Left colon (tissue), 2 donors: ENCODE measurements at regions of chr15 and their contacts with region 1.

Region 1: DNA sequence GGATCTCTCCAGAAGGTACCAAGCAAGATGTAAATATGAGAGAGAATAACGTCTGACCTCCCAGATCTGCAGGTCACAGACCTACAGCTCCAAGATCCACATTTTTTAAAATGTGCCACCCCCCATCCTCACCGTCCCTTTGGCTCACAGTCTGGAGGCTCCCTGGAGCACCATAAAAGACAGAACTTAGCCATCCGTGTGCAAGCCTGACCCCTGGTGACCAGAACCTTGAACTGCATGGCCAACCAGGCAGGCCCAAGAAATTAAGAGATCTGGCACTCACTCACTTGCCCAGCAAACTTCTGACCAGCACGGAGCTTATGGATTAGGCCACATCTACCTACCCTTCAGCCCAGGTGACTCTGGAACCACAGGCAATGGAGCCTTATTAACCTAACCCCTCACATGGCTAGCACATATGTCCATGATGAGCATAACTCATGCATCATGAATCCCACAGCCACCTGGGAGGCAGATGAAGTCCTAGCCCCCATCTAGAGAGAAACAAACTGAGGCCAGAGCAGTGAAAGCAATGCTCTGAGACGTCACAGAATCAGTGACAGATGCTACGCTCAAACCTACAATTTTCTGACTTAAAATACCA is 275.3 kb downstream of the UACA start:
- DNase-seq: peak in 1 of 2 donors; percentile 77
- ATAC-seq: peak; percentile 75

Region 2: DNA sequence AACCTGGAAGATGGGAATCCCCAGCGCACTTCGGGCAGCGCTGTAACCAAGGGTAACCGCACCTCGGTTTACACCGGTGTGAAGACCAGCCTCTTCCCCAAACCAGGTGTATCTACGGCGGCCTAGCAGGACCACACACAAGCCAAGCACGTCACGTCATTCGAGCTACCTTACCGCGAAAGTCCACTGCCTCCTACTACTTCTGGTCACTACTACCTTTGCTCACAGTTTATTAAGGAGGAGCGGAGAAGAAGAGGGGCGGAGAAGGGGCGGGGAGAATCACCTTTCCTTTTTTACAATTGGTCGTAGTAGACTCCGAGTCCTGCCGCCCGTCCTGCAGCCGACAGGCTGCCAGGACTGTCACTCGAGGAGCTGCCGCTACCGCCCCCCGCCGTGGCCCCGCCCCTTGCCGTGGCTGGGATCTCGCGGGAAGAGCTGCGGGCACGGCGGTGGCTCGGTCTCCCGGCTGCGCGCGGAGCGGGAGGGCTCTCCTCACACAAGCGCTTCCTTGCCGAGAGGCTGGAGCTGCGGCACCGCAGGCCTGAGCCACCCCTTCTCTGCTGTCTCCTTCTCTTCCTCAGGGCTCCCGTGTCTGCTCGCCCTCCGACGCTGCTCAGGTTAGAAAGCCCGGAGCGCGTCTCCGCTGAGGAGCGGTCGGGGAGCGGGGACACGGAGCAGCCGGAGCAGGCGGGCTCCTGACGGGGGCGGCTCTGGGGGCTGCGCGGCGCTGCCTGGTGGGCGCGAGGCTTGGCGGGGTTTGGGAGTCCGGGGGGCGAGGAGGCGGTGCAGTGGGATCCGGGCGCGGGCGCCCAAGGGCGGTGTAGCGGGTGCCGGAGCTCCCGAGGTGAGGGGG is 1327.7 kb before region 1 on chr15 and contains the start of gene GLCE:
- intact Hi-C with region 1: no loop called
- DNase-seq: peak; percentile 96 to 97
- ATAC-seq: peak; percentile 92
- total RNA-seq, gene GLCE: 34.0 to 37.7 TPM

Region 3: DNA sequence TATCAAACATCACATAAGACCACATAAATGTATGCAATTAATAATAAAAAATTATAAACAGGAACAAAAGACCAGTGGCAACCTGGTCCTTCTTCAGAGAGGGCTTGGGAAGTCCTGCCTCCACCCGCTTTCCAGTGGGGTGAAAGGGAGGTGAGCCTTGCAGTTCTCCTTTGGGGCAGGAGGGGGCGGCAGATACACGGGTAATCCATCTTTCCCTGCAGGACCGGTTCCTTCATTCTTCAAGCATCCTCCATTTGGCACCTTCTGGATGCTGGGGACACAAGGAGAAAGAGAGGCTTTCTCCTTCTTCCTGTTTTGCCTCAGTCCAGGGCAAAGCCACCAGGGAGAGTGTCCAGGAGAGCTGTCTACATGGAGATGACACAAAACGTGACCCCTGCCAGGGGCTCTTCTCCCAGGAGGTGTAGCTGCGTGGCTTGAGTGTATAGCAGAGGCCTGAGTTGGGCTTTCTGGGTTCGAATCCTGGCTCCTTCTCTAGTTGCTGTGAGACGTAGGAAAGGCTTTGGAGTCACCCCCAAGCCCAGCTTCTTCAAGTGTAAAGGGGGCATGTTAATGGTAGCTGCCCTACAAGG is 1012.2 kb before region 1 on chr15:
- intact Hi-C with region 1: loop called (anchors 5 to 10 kb)
- DNase-seq: peak; percentile 39 to 84
- ATAC-seq: peak; percentile 94

Region 4: DNA sequence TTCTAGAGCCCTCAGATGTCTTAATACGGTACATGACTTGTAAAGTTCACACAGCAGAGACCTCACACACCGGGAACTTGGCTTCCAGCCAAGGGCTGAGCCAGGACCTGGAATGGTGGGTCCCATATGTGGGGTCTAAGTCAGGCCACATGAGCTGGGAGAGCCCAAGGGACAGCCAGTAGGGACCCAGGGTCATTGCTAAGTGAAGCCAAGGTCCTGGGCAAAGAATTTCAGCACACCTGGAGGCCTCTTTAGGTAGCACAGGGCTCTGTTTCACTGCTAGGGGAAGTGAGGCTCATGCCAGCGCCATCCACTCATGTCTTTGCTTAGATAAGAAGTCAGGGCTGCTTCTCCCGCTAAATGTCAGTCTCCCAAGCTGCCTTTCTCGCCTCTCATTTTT is 273.8 kb before region 1 on chr15:
- intact Hi-C with region 1: no loop called
- DNase-seq: no peak
- ATAC-seq: no peak